CD4-positive, alpha-beta T cell (primary cell): ENCODE measurements at regions of chr7 and their contacts with region 1.

Region 1: GRCh38 chr7:101138213-101138870 is 11.4 kb downstream of the SERPINE1 start:
- DNase-seq: peak; percentile 25 to 92 (median 76)
- ATAC-seq: peak; percentile 93
- H3K4me3 ChIP-seq: no peak overlapping the region
- H3K4me3 Mint-ChIP-seq: peak overlapping the region; percentile 11
- H3K27ac ChIP-seq: no peak overlapping the region
- H3K27ac Mint-ChIP-seq: no peak overlapping the region
- H3K4me1 ChIP-seq: peaks cover 16% of the 10 kb centered on the region
- H3K4me1 Mint-ChIP-seq: peaks cover 6% of the 10 kb centered on the region
- H3K27me3 ChIP-seq: peaks cover 4 to 8% of the 10 kb centered on the region in 2 experiments
- H3K27me3 Mint-ChIP-seq: peaks cover 40% of the 10 kb centered on the region
- CTCF ChIP-seq: peak; percentile 58

Region 2: GRCh38 chr7:101085162-101085987 is 53.0 kb before region 1 on chr7 and contains the start of gene TRIM56:
- CTCF ChIA-PET with region 1: no interaction called
- POLR2A ChIA-PET with region 1: no interaction called
- intact Hi-C with region 1: loop called in 1 of 2 experiments (anchors 5 kb)
- DNase-seq: peak; percentile 52 to 88 (median 70)
- ATAC-seq: peak; percentile 90
- H3K4me3 ChIP-seq: peak within 1 kb of the TSS; percentile 99
- H3K4me3 Mint-ChIP-seq: peak within 1 kb of the TSS; percentile 100
- H3K27ac ChIP-seq: peak within 1 kb of the TSS; percentile 91 to 92
- H3K27ac Mint-ChIP-seq: peak within 1 kb of the TSS; percentile 96
- H3K4me1 ChIP-seq: peaks cover 53% of the 10 kb centered on the region
- H3K4me1 Mint-ChIP-seq: peaks cover 28% of the 10 kb centered on the region
- H3K27me3 ChIP-seq: no peaks in the 10 kb centered on the region
- H3K27me3 Mint-ChIP-seq: no peaks in the 10 kb centered on the region
- CTCF ChIP-seq: no peak
- total RNA-seq, gene TRIM56: 29.9 to 31.8 TPM

Region 3: GRCh38 chr7:101153969-101154692 is 15.8 kb after region 1 on chr7 and contains the start of gene AP1S1:
- CTCF ChIA-PET with region 1: interaction called, 17 read pairs
- POLR2A ChIA-PET with region 1: interaction called, 4 read pairs
- intact Hi-C with region 1: no loop called
- DNase-seq: peak; percentile 83 to 98 (median 89)
- ATAC-seq: peak; percentile 88
- H3K4me3 ChIP-seq: peak within 1 kb of the TSS; percentile 69
- H3K4me3 Mint-ChIP-seq: peak within 1 kb of the TSS; percentile 89
- H3K27ac ChIP-seq: no peak within 1 kb of the TSS
- H3K27ac Mint-ChIP-seq: peak within 1 kb of the TSS; percentile 72
- H3K4me1 ChIP-seq: peaks cover 19% of the 10 kb centered on the region
- H3K4me1 Mint-ChIP-seq: peaks cover 15% of the 10 kb centered on the region
- H3K27me3 ChIP-seq: no peaks in the 10 kb centered on the region
- H3K27me3 Mint-ChIP-seq: peaks cover 15% of the 10 kb centered on the region
- CTCF ChIP-seq: no peak
- total RNA-seq, gene AP1S1: 3.0 to 3.9 TPM

Region 4: DNA sequence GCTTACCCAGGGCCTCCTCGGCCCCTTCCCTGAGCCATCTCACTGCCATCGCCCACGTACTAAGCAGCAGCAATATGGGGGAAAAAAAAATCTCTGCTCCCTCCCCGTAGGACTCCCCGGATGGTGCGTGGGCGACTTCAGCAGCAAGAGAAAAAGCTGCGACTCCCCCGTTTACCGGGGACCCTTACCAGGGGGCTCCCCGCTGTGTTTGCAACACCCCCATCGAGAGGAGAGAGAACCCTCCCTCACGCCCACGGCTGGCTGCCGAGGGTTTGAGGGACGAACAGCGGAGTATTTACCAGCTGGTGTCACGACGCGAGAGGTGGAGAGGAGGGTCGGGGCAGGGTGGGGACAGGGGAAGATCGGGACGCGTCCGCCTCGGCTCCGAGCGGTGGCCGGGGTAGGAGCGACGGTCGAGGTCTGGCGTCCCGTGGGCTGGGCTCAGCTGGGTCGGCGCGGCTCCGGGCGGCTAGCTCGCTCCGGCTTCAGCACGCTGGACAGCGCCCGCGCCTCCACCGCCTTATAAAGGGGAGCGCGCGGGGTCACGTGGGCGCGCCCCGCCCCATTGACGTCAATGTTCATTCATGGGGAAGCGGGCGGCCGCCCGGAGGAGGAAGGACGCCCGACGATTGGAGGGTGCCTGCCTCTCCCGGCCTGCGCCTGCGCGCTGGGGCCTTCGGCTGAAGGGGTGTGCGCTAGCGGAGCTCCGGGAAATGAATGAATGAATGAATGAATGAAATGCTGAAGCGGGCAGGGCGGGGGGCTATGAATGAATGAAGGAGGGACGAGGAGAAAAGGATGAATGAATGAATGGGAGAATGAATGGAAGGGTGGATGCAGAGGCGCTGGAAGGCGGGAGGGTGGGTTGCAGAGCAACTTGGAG is 27.0 kb after region 1 on chr7 and contains the start of gene VGF:
- CTCF ChIA-PET with region 1: interaction called, 28 read pairs
- POLR2A ChIA-PET with region 1: no interaction called
- intact Hi-C with region 1: no loop called
- DNase-seq: peak; percentile 85 to 97 (median 92)
- ATAC-seq: peak; percentile 85
- H3K4me3 ChIP-seq: peak within 1 kb of the TSS; percentile 19
- H3K4me3 Mint-ChIP-seq: peak within 1 kb of the TSS; percentile 74
- H3K27ac ChIP-seq: no peak within 1 kb of the TSS
- H3K27ac Mint-ChIP-seq: peak within 1 kb of the TSS; percentile 14
- H3K4me1 ChIP-seq: peaks cover 58% of the 10 kb centered on the region
- H3K4me1 Mint-ChIP-seq: peaks cover 43% of the 10 kb centered on the region
- H3K27me3 ChIP-seq: peaks cover 78 to 83% of the 10 kb centered on the region in 2 experiments
- H3K27me3 Mint-ChIP-seq: peaks cover 80% of the 10 kb centered on the region
- CTCF ChIP-seq: no peak
- total RNA-seq, gene VGF: not detected

Region 5: DNA sequence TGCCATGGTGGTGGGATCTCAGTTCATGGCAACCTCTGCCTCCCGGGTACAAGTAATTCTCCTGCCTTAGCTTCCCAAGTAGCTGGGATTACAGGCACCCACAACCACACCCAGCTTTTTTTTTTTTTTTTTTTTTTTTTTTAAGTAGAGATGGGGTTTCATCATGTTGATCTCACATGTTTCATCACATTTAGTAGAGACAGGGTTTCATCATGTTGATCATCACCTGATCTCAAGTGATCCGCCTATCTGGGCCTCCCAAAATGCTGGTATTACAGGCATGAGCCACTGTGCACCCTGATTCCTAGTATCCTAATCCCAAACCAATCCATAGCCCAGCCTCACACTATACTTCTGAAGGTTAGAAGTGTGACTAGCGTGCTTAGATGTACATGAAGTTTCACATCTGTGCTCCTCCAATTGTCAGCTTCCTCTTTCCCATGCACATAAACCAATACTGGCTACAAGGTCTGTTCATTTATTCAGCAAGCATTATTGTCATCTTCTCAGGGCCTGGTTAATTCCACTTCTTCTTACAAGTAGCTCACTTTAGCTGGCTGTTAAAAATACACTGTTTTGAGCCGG is 48.6 kb after region 1 on chr7:
- CTCF ChIA-PET with region 1: interaction called, 41 read pairs
- POLR2A ChIA-PET with region 1: no interaction called
- intact Hi-C with region 1: no loop called
- DNase-seq: no peak
- ATAC-seq: no peak
- H3K4me3 ChIP-seq: no peak overlapping the region
- H3K4me3 Mint-ChIP-seq: no peak overlapping the region
- H3K27ac ChIP-seq: no peak overlapping the region
- H3K27ac Mint-ChIP-seq: no peak overlapping the region
- H3K4me1 ChIP-seq: peaks cover 4% of the 10 kb centered on the region
- H3K4me1 Mint-ChIP-seq: no peaks in the 10 kb centered on the region
- H3K27me3 ChIP-seq: peaks cover 8 to 14% of the 10 kb centered on the region in 2 experiments
- H3K27me3 Mint-ChIP-seq: peaks cover 35% of the 10 kb centered on the region
- CTCF ChIP-seq: no peak

Region 6: DNA sequence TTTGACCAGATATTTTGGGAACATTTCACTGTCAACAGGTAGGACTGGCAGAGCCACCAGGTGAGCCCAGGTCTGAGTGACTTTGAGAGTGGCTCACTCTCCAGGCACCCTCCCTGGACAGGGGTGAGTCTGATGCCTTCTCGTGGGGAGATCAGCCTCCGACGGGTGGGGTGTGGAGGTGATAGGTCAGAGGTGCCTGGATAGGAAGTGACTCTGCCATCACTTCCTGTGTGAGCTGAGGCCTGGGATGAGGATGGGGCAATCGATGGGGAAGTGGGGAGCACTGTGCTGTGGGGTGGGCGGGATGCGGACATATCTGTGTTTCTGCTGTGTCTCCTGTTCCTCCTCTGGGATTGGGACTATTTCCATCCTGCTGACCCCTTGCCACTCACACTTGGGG is 148.7 kb after region 1 on chr7:
- CTCF ChIA-PET with region 1: interaction called, 34 read pairs
- POLR2A ChIA-PET with region 1: no interaction called
- intact Hi-C with region 1: no loop called
- DNase-seq: peak in 1 of 14 experiments; percentile 26
- ATAC-seq: no peak
- H3K4me3 ChIP-seq: no peak overlapping the region
- H3K4me3 Mint-ChIP-seq: no peak overlapping the region
- H3K27ac ChIP-seq: no peak overlapping the region
- H3K27ac Mint-ChIP-seq: no peak overlapping the region
- H3K4me1 ChIP-seq: peaks cover 13% of the 10 kb centered on the region
- H3K4me1 Mint-ChIP-seq: peaks cover 8% of the 10 kb centered on the region
- H3K27me3 ChIP-seq: peaks cover 4 to 6% of the 10 kb centered on the region in 2 experiments
- H3K27me3 Mint-ChIP-seq: peaks cover 26% of the 10 kb centered on the region
- CTCF ChIP-seq: no peak